ENCODE measurements at regions of chr6 and their contacts with region 1.

Region 1: GRCh38 chr6:70686548-70687133 is 19.0 kb downstream of the SMAP1 start:
- DNase-seq: no peak
- H3K4me3 Mint-ChIP-seq: no peak overlapping the region
- H3K27ac Mint-ChIP-seq: no peak overlapping the region
- H3K4me1 Mint-ChIP-seq: peaks cover 44% of the 10 kb centered on the region
- H3K27me3 Mint-ChIP-seq: no peaks in the 10 kb centered on the region

Region 2: GRCh38 chr6:70253923-70254322 is 432.7 kb before region 1 on chr6:
- CTCF ChIA-PET with region 1: no interaction called
- intact Hi-C with region 1: no loop called
- DNase-seq: no peak
- H3K4me3 Mint-ChIP-seq: no peak overlapping the region
- H3K27ac Mint-ChIP-seq: no peak overlapping the region
- H3K4me1 Mint-ChIP-seq: no peaks in the 10 kb centered on the region
- H3K27me3 Mint-ChIP-seq: peaks cover 4% of the 10 kb centered on the region

Region 3: GRCh38 chr6:70413114-70413991 is 273.3 kb before region 1 on chr6 and contains the start of gene FAM135A:
- CTCF ChIA-PET with region 1: interaction called, 3 read pairs
- intact Hi-C with region 1: loop called (anchors 1 kb)
- DNase-seq: peak; percentile 99
- H3K4me3 Mint-ChIP-seq: peak within 1 kb of the TSS; percentile 99
- H3K27ac Mint-ChIP-seq: peak within 1 kb of the TSS; percentile 84
- H3K4me1 Mint-ChIP-seq: peaks cover 16% of the 10 kb centered on the region
- H3K27me3 Mint-ChIP-seq: no peaks in the 10 kb centered on the region
- total RNA-seq, gene FAM135A: 11.5 to 11.9 TPM

Region 4: GRCh38 chr6:70547313-70547712 is 139.3 kb before region 1 on chr6:
- CTCF ChIA-PET with region 1: interaction called, 4 read pairs
- intact Hi-C with region 1: loop called (anchors 1 kb)
- DNase-seq: peak; percentile 25
- H3K4me3 Mint-ChIP-seq: no peak overlapping the region
- H3K27ac Mint-ChIP-seq: no peak overlapping the region
- H3K4me1 Mint-ChIP-seq: no peaks in the 10 kb centered on the region
- H3K27me3 Mint-ChIP-seq: no peaks in the 10 kb centered on the region

Region 5: GRCh38 chr6:70667711-70668498 is 18.7 kb before region 1 on chr6 and contains the start of gene SMAP1:
- CTCF ChIA-PET with region 1: interaction called, 17 read pairs
- intact Hi-C with region 1: loop called (anchors 1 kb)
- DNase-seq: peak; percentile 94
- H3K4me3 Mint-ChIP-seq: peak within 1 kb of the TSS; percentile 90
- H3K27ac Mint-ChIP-seq: peak within 1 kb of the TSS; percentile 93
- H3K4me1 Mint-ChIP-seq: peaks cover 52% of the 10 kb centered on the region
- H3K27me3 Mint-ChIP-seq: no peaks in the 10 kb centered on the region
- total RNA-seq, gene SMAP1: 15.8 to 16.1 TPM